Breast epithelium (tissue), 4 donors: ENCODE measurements at regions of chr2 and their contacts with region 1.

Region 1: GRCh38 chr2:102376052-102376591 is 20.5 kb downstream of the IL18R1 start:
- DNase-seq: no peak
- H3K4me3 ChIP-seq: no peak overlapping the region
- H3K27ac ChIP-seq: no peak overlapping the region
- H3K4me1 ChIP-seq: no peaks in the 10 kb centered on the region
- H3K27me3 ChIP-seq: no peaks in the 10 kb centered on the region
- CTCF ChIP-seq: no peak
- POLR2A ChIP-seq: no peak

Region 2: GRCh38 chr2:102399499-102400141 is 23.5 kb after region 1 on chr2:
- intact Hi-C with region 1: loop called (anchors 2 kb)
- DNase-seq: no peak
- H3K4me3 ChIP-seq: no peak overlapping the region
- H3K27ac ChIP-seq: no peak overlapping the region
- H3K4me1 ChIP-seq: no peaks in the 10 kb centered on the region
- H3K27me3 ChIP-seq: no peaks in the 10 kb centered on the region
- CTCF ChIP-seq: no peak
- POLR2A ChIP-seq: no peak